ENCODE measurements at regions of chr5 and their contacts with region 1.

Region 1: DNA sequence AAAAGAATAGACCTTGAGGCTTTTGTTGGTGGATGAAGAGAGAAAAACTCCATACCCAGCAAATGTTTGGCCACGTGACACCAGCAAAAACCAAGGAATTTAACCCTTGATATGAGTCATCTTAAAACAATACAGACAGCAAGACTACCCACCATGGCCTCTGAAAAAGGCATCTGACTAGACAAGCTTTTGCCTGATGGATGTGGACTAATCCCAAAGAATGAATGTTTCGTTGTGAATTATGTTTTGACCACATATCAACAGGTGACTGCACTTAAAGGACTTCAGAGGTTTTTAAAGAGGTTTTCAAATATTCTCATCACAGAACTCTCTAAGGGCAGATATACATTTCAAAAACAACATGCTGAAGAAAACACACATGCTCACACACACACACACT is 33.0 kb upstream of the SLC1A3 start:
- DNase-seq: no peak
- H3K4me3 ChIP-seq: no peak overlapping the region
- H3K27ac ChIP-seq: no peak overlapping the region
- H3K4me1 ChIP-seq: no peaks in the 10 kb centered on the region
- H3K27me3 ChIP-seq: no peaks in the 10 kb centered on the region
- CTCF ChIP-seq: no peak
- POLR2A ChIP-seq: no peak

Region 2: DNA sequence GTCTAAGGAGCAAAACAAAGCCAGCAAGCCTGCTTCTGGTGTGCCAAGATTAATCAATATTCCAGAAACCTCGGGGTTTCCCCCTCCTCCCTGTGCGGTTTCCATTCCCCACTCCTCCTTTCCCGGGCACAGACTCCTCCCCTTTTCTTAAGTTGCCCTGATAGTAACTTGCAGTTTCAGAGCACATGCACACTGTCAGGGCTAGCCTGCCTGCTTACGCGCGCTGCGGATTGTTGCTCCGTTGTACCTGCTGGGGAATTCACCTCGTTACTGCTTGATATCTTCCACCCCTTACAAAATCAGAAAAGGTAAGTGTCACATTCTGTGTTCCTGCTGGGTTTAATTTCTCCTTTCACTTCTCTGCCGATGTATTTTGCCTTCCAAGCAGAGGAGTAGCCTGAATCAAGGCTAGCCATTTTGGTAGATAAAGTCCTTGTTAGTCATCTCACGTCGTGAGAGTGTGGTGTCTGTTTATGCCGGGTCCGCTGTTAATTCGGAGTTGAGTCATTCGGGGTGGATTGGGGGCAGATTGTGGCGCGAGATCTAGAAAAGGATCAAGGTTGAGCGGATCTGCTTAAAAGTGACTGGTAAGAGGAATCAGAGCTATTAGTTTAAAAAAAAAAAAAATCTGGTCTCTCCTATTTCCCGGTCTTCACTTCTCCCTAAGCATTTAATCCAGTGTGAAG is 33.1 kb after region 1 on chr5 and contains the start of gene SLC1A3:
- intact Hi-C with region 1: no loop called
- DNase-seq: peak in 1 of 2 donors; percentile 27
- H3K4me3 ChIP-seq: peak within 1 kb of the TSS; percentile 54 to 78 (median 54)
- H3K27ac ChIP-seq: peak within 1 kb of the TSS; percentile 6 to 71
- H3K4me1 ChIP-seq: peaks cover 0 to 4% of the 10 kb centered on the region in 2 donors
- H3K27me3 ChIP-seq: no peaks in the 10 kb centered on the region
- CTCF ChIP-seq: no peak
- POLR2A ChIP-seq: peak; percentile 41
- total RNA-seq, gene SLC1A3: 29.8 to 122 (median 87.5) TPM

Region 3: DNA sequence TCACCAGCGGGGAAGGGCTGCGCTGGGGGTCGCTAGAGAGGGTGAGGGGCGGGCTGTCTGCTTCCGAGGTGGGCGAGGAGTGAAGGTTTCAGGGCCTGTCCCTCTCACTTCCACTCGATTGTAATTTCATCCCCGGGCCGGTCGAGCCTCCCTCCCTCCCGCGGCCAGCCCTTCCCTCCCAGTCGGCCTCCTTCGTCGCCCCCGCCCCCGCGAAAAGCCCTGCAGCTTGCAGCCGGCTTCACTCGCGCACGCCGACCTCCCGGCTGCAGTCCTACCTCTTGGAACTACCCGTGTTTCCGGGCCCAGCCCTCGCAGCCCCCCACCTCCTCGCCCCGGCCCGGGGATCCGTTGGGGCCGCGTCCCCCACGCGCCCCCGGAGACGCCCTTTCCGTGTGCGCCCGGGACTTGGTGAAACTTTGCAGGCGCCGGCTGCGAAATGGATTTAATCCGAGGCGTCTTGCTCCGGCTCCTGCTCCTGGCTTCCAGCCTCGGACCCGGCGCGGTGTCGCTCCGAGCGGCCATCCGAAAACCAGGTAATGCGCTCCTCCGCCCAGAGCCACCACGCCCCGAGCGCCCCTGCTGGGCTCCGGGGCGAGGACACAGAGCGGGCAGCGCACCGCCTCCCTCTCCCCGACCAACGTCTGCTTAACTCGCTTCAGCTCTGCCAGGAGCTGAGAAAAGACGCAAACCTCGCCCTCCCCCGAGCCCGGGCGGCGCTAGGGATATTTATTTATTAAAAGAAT is 1685.0 kb after region 1 on chr5 and contains the start of gene EGFLAM:
- intact Hi-C with region 1: loop called (anchors 10 kb)
- DNase-seq: no peak
- H3K4me3 ChIP-seq: peak within 1 kb of the TSS; percentile 44 to 72 (median 60)
- H3K27ac ChIP-seq: peak within 1 kb of the TSS; percentile 61 to 82
- H3K4me1 ChIP-seq: no peaks in the 10 kb centered on the region
- H3K27me3 ChIP-seq: peaks cover 0 to 34% of the 10 kb centered on the region in 2 donors
- CTCF ChIP-seq: no peak
- POLR2A ChIP-seq: no peak
- total RNA-seq, gene EGFLAM: 19.5 to 31.5 (median 30.5) TPM

Measured in breast epithelium (tissue), 4 donors.